Ascending aorta (tissue), 2 donors: ENCODE measurements at regions of chr19 and their contacts with region 1.

Region 1: DNA sequence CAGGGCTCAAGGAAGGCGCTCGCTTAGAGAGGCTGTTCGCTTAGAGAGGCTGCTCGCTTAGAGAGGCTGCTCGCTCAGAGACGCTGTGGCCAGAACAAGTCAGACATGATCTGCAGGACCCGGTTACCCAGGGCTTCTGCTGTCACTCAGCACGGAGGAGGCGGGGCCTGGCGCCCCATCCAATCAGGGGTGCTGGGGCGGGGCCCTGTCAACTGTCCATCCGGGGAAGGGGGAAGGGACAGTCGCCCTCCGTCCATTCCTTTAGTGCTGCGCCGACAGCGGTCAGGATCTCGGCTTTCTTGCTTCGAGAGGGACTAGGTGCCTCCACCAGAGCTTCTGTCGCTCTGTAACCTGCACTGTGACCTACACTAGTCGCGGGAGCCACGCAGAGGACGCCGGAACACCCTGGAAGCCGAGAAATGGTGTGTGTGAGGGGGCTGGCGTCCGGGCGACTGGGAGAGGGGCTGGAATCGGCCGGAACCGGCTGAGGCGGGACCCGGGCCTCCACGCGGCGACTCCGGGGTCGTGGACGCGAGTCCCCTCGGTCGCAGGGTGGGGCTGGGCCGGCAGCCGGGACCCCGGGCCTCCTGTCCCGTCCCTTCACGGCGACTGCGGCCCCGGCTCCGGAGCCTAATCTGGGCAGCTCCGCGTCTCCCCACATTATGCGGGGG is at the start of gene ZNF440:
- DNase-seq: peak; percentile 85 to 98
- H3K4me3 ChIP-seq: peak within 1 kb of the TSS; percentile 84 to 90
- H3K27ac ChIP-seq: peak within 1 kb of the TSS; percentile 85 to 93
- H3K4me1 ChIP-seq: peaks cover 0 to 3% of the 10 kb centered on the region in 2 donors
- H3K27me3 ChIP-seq: no peaks in the 10 kb centered on the region
- CTCF ChIP-seq: no peak
- total RNA-seq, gene ZNF440: 1.1 TPM

Region 2: GRCh38 chr19:11766597-11767591 is 47.3 kb before region 1 on chr19 and contains the start of gene ZNF441:
- intact Hi-C with region 1: loop called (anchors 1 kb)
- DNase-seq: peak; percentile 89 to 98
- H3K4me3 ChIP-seq: peak within 1 kb of the TSS; percentile 93 to 94
- H3K27ac ChIP-seq: peak within 1 kb of the TSS; percentile 91 to 95
- H3K4me1 ChIP-seq: peaks cover 0 to 11% of the 10 kb centered on the region in 2 donors
- H3K27me3 ChIP-seq: no peaks in the 10 kb centered on the region
- CTCF ChIP-seq: no peak
- total RNA-seq, gene ZNF441: 0.85 TPM

Region 3: DNA sequence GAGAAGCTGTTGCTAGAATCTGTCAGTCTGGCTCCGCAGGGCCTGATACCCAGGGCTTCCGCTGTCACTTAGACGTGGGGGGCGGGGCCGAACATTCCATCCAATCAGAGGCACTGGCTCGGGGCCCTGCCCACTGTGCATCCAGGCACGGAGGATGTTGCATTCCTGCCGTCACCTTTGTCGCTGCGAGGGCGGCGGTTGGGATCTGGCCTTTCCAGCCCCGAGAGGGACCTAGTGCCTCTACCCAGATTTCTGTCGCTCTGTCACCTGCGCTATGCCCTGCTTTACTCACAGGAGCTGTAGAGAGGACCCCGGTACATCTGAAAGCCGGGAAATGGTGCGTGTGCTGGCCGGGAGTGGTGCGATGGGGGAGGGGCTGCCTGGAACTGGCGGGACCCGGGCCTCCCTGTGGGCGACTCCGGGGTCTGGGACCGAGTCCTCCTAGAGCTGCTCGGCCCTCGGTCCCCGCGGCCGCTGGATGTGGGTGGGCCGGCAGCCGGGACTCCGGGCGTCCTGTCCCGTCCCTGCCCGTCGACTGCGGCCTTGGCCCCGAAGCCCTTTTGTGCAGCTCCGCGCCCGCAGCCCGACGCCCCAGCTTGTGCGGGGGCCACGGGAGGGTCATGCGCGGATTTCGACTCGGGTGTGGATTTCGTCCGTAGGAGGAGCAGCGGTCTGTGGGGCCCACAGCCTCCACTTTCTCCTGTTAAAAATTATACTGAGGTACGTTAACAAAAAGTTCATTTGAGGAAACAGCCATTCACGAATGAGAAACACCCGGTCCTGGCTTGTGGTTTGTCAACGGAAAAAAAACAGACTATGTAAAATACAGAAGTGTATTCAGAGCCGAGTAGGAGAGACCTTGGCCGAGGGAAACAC is 34.7 kb after region 1 on chr19 and contains the start of gene ZNF439:
- intact Hi-C with region 1: loop called (anchors 5 kb)
- DNase-seq: peak; percentile 71 to 93
- H3K4me3 ChIP-seq: peak within 1 kb of the TSS; percentile 63 to 89
- H3K27ac ChIP-seq: peak within 1 kb of the TSS; percentile 53 to 62
- H3K4me1 ChIP-seq: peaks cover 2 to 3% of the 10 kb centered on the region in 2 donors
- H3K27me3 ChIP-seq: no peaks in the 10 kb centered on the region
- CTCF ChIP-seq: no peak
- total RNA-seq, gene ZNF439: 2.3 TPM

Region 4: GRCh38 chr19:11861301-11861700 is 47.1 kb after region 1 on chr19:
- intact Hi-C with region 1: no loop called
- DNase-seq: no peak
- H3K4me3 ChIP-seq: no peak overlapping the region
- H3K27ac ChIP-seq: no peak overlapping the region
- H3K4me1 ChIP-seq: no peaks in the 10 kb centered on the region
- H3K27me3 ChIP-seq: no peaks in the 10 kb centered on the region
- CTCF ChIP-seq: no peak